ENCODE measurements at regions of chr9 and their contacts with region 1.

Region 1: DNA sequence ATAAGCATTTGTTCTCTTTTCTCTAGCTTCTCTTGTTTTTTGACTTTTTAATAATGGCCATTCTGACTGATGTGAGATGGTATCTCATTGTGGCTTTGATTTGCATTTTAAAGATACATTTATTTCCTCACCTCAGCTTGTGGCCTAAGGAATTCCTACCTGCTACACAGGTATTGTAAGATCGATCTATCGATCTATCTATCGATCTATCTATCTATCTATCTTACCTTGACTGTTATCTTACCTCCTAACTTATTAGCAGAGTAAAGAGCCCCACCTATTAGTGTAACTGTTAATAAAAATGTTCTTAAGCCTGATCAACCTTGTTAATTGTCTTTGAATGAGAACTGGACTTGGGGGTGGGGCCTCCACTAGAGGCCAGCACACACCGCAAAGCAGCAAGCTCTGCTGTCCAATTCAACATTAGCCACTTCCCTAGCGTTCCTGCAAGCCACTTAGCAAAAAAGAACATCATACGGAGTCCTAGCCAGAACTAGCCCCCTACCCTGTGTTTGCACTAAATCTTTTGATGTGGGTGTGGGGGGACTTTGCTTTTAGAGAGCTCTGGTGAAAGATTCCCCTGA is 515.7 kb downstream of the KDM4C start:
- DNase-seq: no peak
- H3K4me3 ChIP-seq: no peak overlapping the region
- H3K27ac ChIP-seq: no peak overlapping the region
- H3K4me1 ChIP-seq: no peaks in the 10 kb centered on the region
- H3K27me3 ChIP-seq: no peaks in the 10 kb centered on the region
- CTCF ChIP-seq: peak; percentile 52 to 57 (median 55)
- EP300 ChIP-seq: no peak
- POLR2A ChIP-seq: no peak
- RAD21 ChIP-seq: peak; percentile 68 to 72

Region 2: GRCh38 chr9:7259544-7260241 is 13.8 kb before region 1 on chr9:
- CTCF ChIA-PET with region 1: interaction called, 12 read pairs
- POLR2A ChIA-PET with region 1: no interaction called
- DNase-seq: no peak
- H3K4me3 ChIP-seq: no peak overlapping the region
- H3K27ac ChIP-seq: no peak overlapping the region
- H3K4me1 ChIP-seq: no peaks in the 10 kb centered on the region; a peak in 3 of 7 replicates
- H3K27me3 ChIP-seq: no peaks in the 10 kb centered on the region; a peak in 1 of 7 replicates
- CTCF ChIP-seq: peak in 1 of 3 experiments; percentile 33; a peak in 1 of 4 replicates
- EP300 ChIP-seq: no peak
- POLR2A ChIP-seq: no peak
- RAD21 ChIP-seq: peak; percentile 31 to 50; a peak in 3 of 4 replicates

Measured in H1 (cell line).